Mammary epithelial cell (primary cell): ENCODE measurements at regions of chr5 and their contacts with region 1.

Region 1: DNA sequence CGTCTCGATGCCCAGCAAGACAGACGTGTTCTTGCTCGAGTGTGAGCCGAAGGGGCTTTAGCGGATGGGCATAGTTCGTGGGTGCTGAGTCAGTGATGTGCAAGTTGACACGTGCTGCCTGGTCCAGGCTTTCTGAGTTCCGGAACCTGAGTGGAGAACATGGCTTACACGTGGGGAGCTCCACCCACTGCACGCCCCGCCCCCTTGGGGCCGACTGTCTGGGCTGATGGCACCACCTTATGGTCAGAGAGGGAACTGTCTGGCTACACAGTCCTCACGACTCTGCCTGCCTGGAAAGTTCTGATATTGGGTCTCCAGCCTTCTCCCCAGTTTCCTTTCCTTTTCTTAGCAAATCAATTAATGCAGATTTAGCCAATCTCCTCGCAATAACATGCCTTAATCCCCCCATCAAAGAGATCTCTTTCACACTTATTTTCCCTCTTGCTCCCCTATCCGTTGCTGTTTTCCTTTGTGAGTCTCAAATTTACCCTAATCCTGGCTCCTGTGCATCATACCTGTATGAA is 3.8 kb upstream of the STC2 start:
- DNase-seq: peak; percentile 65
- H3K4me3 ChIP-seq: no peak overlapping the region
- H3K27ac ChIP-seq: no peak overlapping the region
- H3K4me1 ChIP-seq: peaks cover 29% of the 10 kb centered on the region
- H3K27me3 ChIP-seq: no peaks in the 10 kb centered on the region
- CTCF ChIP-seq: peak; percentile 84 to 94

Region 2: GRCh38 chr5:172707285-172708182 is 624.5 kb before region 1 on chr5:
- CTCF ChIA-PET with region 1: interaction called, 3 read pairs
- dilution Hi-C with region 1: no loop called
- in situ Hi-C with region 1: no loop called
- intact Hi-C with region 1: loop called (anchors 5 kb)
- DNase-seq: peak; percentile 56
- H3K4me3 ChIP-seq: no peak overlapping the region
- H3K27ac ChIP-seq: no peak overlapping the region
- H3K4me1 ChIP-seq: no peaks in the 10 kb centered on the region
- H3K27me3 ChIP-seq: peaks cover 3% of the 10 kb centered on the region
- CTCF ChIP-seq: peak; percentile 60 to 71

Region 3: GRCh38 chr5:173016621-173017047 is 315.4 kb before region 1 on chr5:
- CTCF ChIA-PET with region 1: interaction called, 11 read pairs
- dilution Hi-C with region 1: no loop called
- in situ Hi-C with region 1: no loop called
- intact Hi-C with region 1: no loop called
- DNase-seq: peak; percentile 89
- H3K4me3 ChIP-seq: no peak overlapping the region
- H3K27ac ChIP-seq: peak overlapping the region; percentile 62
- H3K4me1 ChIP-seq: peaks cover 26% of the 10 kb centered on the region
- H3K27me3 ChIP-seq: no peaks in the 10 kb centered on the region
- CTCF ChIP-seq: no peak

Region 4: DNA sequence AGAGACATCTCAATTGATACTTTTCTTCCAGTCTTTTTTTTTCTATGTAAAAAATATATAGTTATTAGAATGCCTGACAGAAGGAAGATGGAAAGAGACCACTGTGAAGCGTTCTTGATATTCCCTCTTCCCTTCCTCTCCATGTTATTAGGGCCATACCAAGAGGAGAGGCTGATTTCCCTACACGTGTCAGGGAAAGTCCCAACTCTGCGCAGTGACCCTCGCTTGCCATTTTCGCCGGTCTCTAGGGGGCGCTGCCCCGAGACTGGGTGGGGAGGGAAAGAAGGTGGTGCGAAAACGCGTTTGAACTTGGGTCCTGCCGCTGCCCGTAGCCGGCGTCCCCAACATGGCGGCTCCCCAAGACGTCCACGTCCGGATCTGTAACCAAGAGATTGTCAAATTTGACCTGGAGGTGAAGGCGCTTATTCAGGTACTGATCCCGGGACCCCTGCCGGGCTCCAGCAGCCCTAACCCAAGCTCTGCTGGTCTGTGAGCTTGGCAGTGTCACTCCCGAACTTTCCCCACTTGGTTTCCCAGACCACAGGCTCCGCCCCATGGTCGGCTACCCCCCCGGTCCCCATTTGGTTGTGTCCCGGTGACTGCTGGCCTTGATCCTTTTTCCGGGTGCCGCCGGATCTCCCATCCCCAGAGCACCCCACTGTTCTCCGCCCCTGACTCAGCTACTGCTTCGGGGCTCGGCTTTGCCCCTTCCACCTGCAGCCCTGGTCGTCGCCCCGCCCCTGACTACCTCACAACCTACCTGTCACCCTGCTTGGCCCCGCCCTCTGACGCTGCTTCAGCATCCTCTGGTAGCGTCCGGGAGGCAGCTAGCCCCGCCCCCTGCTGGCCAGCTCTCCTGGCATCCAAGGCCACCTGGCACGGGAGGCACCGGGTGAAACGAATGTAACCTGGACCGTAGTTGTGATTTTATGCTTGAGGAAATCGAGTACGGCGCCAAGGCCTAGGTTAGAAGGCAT is 187.5 kb before region 1 on chr5 and contains the start of gene BNIP1:
- CTCF ChIA-PET with region 1: interaction called, 3 read pairs
- dilution Hi-C with region 1: no loop called
- in situ Hi-C with region 1: no loop called
- intact Hi-C with region 1: loop called (anchors 1 kb)
- DNase-seq: peak; percentile 93
- H3K4me3 ChIP-seq: peak within 1 kb of the TSS; percentile 79 to 89 (median 84)
- H3K27ac ChIP-seq: peak within 1 kb of the TSS; percentile 94
- H3K4me1 ChIP-seq: peaks cover 3% of the 10 kb centered on the region
- H3K27me3 ChIP-seq: no peaks in the 10 kb centered on the region
- CTCF ChIP-seq: peak; percentile 91 to 99
- total RNA-seq, gene BNIP1: 10.8 to 12.4 TPM

Region 5: DNA sequence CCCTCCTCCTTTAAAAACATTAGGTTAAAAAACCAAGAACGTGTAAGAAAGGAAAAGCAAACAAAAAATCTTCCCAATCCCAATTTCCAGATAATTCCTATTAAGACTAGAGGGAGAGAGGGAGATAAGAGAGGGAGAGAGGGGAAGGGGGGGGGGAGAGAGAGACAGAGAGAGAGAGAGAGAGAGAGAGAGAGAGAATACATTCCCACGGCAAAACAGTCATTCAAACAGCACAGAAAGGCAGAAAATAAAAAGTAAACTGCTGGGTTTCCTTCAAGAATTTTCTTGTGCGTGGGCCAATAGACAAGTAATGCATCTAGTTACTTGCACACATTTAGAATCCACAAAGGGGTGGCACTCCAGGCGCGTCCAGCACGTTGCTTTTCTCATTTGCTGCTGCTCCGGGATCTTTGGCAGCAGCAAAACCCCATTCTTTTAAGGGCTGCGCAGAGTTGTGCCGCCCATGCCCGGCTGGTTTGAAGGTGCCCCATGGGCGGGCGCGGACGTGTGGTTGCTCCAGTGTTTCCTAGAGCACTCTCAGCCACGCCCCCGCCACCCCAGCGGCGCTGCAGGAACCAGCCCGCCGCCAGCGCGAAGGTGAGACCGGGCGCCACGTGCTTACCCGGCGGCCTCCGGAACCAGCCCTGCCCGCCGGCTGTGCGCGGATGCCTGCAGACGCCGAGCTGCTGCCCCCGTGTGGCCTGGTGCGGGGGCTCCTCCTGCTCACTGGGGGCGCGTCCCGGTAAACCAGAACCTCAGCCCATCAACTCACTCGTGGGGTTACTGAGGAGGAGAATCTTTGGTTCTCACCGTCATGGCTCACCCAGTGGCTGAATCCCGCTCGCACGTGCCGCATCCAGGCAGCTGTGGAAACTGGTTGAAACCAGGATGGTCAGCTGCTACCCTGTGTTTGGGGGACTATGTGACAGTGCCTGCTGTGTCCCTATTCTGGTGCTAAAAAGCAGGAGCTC is 48.4 kb before region 1 on chr5:
- CTCF ChIA-PET with region 1: no interaction called
- dilution Hi-C with region 1: no loop called
- in situ Hi-C with region 1: no loop called
- intact Hi-C with region 1: no loop called
- DNase-seq: peak; percentile 75
- H3K4me3 ChIP-seq: peak overlapping the region; percentile 24 to 33 (median 24)
- H3K27ac ChIP-seq: no peak overlapping the region
- H3K4me1 ChIP-seq: peaks cover 9% of the 10 kb centered on the region
- H3K27me3 ChIP-seq: no peaks in the 10 kb centered on the region
- CTCF ChIP-seq: peak; percentile 59 to 71

Region 6: DNA sequence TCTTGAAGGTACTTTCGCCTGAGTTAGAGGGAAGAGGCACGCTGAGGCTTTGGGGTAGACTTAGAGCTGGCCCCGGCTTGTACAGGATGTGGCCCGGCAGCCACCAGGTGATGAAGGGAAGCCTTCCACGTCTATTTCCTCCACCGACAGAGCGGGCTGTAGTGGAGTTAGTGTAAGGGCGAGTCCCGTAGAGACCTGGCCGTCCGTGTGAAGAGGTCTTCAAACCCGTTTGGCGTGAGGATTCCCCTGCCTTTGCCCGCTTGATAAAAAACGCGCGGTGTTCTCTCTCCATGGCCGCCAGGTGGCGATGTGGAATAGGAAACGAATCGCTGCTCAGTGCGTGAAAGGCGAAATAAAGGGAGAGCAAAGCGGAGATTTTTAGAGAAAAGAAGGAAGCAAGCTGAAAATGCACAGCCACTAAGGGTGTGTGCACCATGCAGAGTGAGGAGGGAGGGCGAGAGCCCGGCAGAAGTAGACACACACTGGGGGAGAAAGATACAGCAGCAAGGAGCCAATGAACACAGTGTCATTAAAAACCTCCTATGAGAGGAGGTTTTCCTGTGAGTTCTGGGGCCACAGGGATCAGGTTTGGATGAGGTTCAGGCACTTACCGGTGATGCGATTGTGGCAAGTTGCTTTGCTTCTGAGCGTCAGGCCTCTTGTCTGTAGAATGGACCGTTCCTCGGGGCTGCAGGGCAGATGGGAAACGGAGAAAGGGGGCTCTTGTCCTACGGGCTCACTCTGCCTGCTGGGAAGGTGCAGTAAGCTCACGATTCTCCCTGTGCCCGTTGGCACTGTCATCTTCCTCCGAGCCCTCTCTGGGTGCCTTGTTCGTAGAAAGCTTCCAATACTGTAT is 38.0 kb before region 1 on chr5:
- CTCF ChIA-PET with region 1: interaction called, 20 read pairs
- dilution Hi-C with region 1: no loop called
- in situ Hi-C with region 1: no loop called
- intact Hi-C with region 1: loop called (anchors 1 kb)
- DNase-seq: peak; percentile 65
- H3K4me3 ChIP-seq: no peak overlapping the region
- H3K27ac ChIP-seq: no peak overlapping the region
- H3K4me1 ChIP-seq: peaks cover 28% of the 10 kb centered on the region
- H3K27me3 ChIP-seq: no peaks in the 10 kb centered on the region
- CTCF ChIP-seq: peak; percentile 88 to 91

Region 7: DNA sequence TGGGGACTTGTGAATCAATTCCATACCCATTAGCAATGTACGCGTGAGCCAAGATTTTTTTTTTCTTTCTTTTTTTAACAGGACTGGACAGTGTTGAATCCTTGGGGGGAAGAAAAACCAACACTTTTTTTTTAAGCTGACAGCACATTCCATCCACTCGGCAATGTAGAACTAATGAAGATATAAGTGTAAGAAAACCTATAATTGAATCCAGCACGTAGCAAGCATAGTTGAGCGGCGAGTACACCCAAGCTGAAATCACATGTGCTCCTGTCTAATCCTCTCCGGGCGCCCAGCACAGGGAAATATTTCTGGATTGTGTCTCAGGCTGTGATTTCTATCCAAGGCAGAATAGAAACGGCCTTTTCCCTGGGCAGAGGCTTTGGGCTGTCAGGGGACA is 166.3 kb after region 1 on chr5:
- CTCF ChIA-PET with region 1: no interaction called
- dilution Hi-C with region 1: no loop called
- in situ Hi-C with region 1: no loop called
- intact Hi-C with region 1: loop called (anchors 10 kb)
- DNase-seq: no peak
- H3K4me3 ChIP-seq: no peak overlapping the region
- H3K27ac ChIP-seq: no peak overlapping the region
- H3K4me1 ChIP-seq: no peaks in the 10 kb centered on the region
- H3K27me3 ChIP-seq: no peaks in the 10 kb centered on the region
- CTCF ChIP-seq: no peak

Region 8: GRCh38 chr5:173573126-173573960 is 241.3 kb after region 1 on chr5:
- CTCF ChIA-PET with region 1: no interaction called
- dilution Hi-C with region 1: no loop called
- in situ Hi-C with region 1: no loop called
- intact Hi-C with region 1: loop called (anchors 2 kb)
- DNase-seq: peak; percentile 37
- H3K4me3 ChIP-seq: peak overlapping the region in 1 of 3 experiments; percentile 16
- H3K27ac ChIP-seq: no peak overlapping the region
- H3K4me1 ChIP-seq: peaks cover 15% of the 10 kb centered on the region
- H3K27me3 ChIP-seq: no peaks in the 10 kb centered on the region
- CTCF ChIP-seq: peak; percentile 80 to 96